ENCODE measurements at regions of chr15 and their contacts with region 1.

Region 1: DNA sequence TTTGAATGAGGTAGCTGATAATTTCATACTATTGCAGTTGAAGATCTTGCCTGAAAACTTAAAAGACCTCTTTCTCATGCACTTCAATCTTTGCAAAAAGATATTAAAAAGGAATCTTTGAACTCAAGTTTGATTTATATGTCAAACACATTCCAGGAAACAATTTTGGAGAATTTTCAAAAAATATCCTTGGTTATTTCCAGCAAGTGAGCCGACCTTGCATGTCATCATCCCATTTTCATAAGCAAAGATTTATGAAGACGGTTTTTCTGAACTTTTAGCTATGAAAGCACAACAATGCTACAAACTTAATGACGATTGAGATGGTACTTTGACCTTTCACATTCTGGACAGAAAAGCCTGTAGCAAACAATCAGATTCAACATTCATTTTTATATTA is 95.6 kb downstream of the RFX7 start:
- H3K4me3 ChIP-seq: no peak overlapping the region
- H3K27ac ChIP-seq: no peak overlapping the region
- H3K4me1 ChIP-seq: no peaks in the 10 kb centered on the region
- CTCF ChIP-seq: no peak

Region 2: GRCh38 chr15:55993111-55993803 is 154.8 kb before region 1 on chr15 and contains the start of gene NEDD4:
- CTCF ChIA-PET with region 1: no interaction called
- POLR2A ChIA-PET with region 1: no interaction called
- H3K4me3 ChIP-seq: peak within 1 kb of the TSS; percentile 82
- H3K27ac ChIP-seq: peak within 1 kb of the TSS; percentile 89
- H3K4me1 ChIP-seq: peaks cover 8% of the 10 kb centered on the region; the same call in 1 of the 2 replicates
- CTCF ChIP-seq: peak; percentile 70

Region 3: DNA sequence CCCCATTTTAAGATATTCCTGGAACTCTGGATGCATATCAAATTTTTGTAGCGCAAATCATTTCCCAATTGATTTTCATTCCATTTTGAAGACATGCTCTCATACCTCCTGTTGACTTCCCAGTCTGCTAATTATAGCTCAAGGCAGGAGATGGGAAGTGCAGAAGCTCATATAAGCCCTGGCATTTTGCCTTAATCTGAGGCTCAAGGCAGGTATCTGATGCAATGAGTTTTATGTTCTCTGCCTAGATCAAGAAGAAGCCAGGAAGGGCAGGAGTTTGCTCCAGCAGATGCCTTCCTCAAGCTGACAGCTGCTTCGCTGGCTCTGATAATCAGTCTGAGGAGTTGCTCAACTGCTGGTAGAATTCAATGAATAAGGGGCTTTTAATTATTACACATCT is 89.1 kb before region 1 on chr15:
- CTCF ChIA-PET with region 1: no interaction called
- POLR2A ChIA-PET with region 1: interaction called, 11 read pairs
- H3K4me3 ChIP-seq: no peak overlapping the region
- H3K27ac ChIP-seq: no peak overlapping the region; the same call in 1 of the 2 replicates
- H3K4me1 ChIP-seq: peaks cover 5% of the 10 kb centered on the region; the same call in 1 of the 2 replicates
- CTCF ChIP-seq: no peak

Measured in HEK293 (cell line).